ENCODE measurements at regions of chr6 and their contacts with region 1.

Region 1: GRCh38 chr6:159134701-159135364 is 34.4 kb upstream of the FNDC1 start:
- DNase-seq: peak; percentile 46
- ATAC-seq: peak; percentile 90
- H3K4me3 ChIP-seq: no peak overlapping the region
- H3K27ac ChIP-seq: no peak overlapping the region
- H3K4me1 ChIP-seq: no peaks in the 10 kb centered on the region
- H3K27me3 ChIP-seq: peaks cover 32% of the 10 kb centered on the region
- CTCF ChIP-seq: peak; percentile 83
- POLR2A ChIP-seq: no peak
- RAD21 ChIP-seq: peak; percentile 80

Region 2: DNA sequence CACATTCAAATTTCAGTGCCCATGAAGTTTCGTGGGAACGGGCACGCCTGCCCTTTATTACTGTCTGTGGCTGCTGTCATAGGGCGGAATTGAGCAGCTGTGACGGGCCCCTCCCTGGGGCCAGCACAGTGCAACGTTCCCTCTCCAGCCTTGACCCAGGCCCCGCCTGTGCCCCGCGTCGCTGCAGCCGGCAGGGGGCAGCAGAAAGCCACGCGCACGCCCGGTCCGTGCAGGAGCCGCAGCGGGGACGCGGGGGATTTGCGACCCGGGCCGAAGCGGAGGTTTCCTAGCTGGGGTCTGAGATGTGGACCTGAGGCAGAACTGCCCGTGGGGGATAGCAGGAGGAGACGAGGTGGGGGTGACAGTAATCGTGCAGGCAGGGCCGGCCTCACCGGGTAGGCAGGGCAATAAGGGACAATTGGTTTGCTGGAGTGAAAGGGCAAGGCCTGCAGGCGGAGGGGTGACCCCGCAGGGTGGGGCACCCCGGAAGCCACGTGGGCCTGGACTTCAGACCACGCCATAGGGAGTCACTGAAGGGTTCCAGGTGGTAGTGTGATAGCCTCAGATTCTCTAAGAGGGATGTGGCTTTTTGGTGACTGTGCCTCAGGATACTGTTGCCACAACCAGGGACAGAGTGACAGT is 430.5 kb before region 1 on chr6:
- CTCF ChIA-PET with region 1: interaction called, 3 read pairs
- POLR2A ChIA-PET with region 1: no interaction called
- dilution Hi-C with region 1: no loop called
- in situ Hi-C with region 1: no loop called
- intact Hi-C with region 1: loop called (anchors 1 kb)
- DNase-seq: peak; percentile 28
- ATAC-seq: peak; percentile 94
- H3K4me3 ChIP-seq: peak overlapping the region; percentile 50
- H3K27ac ChIP-seq: no peak overlapping the region
- H3K4me1 ChIP-seq: peaks cover 12% of the 10 kb centered on the region; the same call in 1 of the 2 replicates
- H3K27me3 ChIP-seq: no peaks in the 10 kb centered on the region
- CTCF ChIP-seq: peak; percentile 95
- POLR2A ChIP-seq: no peak
- RAD21 ChIP-seq: peak; percentile 83

Region 3: DNA sequence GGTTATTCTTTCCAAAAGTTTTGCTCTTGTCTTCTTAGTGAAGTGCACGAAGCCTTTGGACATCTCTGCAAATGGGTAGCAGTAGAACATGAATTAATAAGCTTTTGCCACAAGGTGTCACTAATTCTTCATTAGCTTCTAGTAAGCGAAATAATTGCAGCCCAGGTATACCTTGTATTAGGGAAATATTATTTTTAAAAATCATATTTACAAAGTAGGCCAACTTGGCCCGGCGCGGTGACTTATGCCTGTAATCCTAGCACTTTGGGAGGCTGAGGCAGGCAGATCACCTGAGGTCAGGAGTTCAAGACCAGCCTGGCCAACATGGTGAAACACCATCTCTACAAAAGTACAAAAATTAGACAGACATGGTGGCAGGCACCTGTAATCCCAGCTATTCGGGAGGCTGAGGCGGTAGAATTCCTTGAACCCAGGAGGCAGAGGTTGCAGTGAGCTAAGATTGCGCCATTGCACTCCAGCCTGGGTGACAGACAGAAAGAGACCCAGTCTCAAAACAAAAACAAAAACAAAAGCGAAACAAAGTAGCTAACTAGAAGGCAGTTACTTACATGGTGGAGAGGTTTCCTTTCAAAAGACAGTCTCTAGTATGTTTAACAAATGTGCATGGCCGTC is 126.1 kb before region 1 on chr6:
- CTCF ChIA-PET with region 1: interaction called, 4 read pairs
- POLR2A ChIA-PET with region 1: no interaction called
- dilution Hi-C with region 1: no loop called
- in situ Hi-C with region 1: no loop called
- intact Hi-C with region 1: loop called (anchors 2 kb)
- DNase-seq: peak; percentile 28
- ATAC-seq: peak; percentile 44; the same call in 1 of the 2 replicates
- H3K4me3 ChIP-seq: no peak overlapping the region
- H3K27ac ChIP-seq: no peak overlapping the region
- H3K4me1 ChIP-seq: no peaks in the 10 kb centered on the region
- H3K27me3 ChIP-seq: no peaks in the 10 kb centered on the region; the same call in 1 of the 2 replicates
- CTCF ChIP-seq: peak; percentile 42
- POLR2A ChIP-seq: no peak
- RAD21 ChIP-seq: peak; percentile 36

Region 4: GRCh38 chr6:159042003-159042825 is 92.6 kb before region 1 on chr6:
- CTCF ChIA-PET with region 1: no interaction called
- POLR2A ChIA-PET with region 1: no interaction called
- dilution Hi-C with region 1: no loop called
- in situ Hi-C with region 1: no loop called
- intact Hi-C with region 1: loop called (anchors 1 kb)
- DNase-seq: peak; percentile 47
- ATAC-seq: peak; percentile 67
- H3K4me3 ChIP-seq: no peak overlapping the region
- H3K27ac ChIP-seq: no peak overlapping the region
- H3K4me1 ChIP-seq: no peaks in the 10 kb centered on the region
- H3K27me3 ChIP-seq: peaks cover 50% of the 10 kb centered on the region
- CTCF ChIP-seq: peak; percentile 79
- POLR2A ChIP-seq: no peak
- RAD21 ChIP-seq: peak; percentile 57

Measured in IMR-90 (cell line).